BJ (cell line): ENCODE measurements at regions of chr7 and their contacts with region 1.

Region 1: GRCh38 chr7:128425850-128426249 is 16.1 kb upstream of the IMPDH1 start:
- DNase-seq: no peak
- H3K4me3 ChIP-seq: no peak overlapping the region
- H3K27me3 ChIP-seq: no peaks in the 10 kb centered on the region
- CTCF ChIP-seq: peak; percentile 96

Region 2: DNA sequence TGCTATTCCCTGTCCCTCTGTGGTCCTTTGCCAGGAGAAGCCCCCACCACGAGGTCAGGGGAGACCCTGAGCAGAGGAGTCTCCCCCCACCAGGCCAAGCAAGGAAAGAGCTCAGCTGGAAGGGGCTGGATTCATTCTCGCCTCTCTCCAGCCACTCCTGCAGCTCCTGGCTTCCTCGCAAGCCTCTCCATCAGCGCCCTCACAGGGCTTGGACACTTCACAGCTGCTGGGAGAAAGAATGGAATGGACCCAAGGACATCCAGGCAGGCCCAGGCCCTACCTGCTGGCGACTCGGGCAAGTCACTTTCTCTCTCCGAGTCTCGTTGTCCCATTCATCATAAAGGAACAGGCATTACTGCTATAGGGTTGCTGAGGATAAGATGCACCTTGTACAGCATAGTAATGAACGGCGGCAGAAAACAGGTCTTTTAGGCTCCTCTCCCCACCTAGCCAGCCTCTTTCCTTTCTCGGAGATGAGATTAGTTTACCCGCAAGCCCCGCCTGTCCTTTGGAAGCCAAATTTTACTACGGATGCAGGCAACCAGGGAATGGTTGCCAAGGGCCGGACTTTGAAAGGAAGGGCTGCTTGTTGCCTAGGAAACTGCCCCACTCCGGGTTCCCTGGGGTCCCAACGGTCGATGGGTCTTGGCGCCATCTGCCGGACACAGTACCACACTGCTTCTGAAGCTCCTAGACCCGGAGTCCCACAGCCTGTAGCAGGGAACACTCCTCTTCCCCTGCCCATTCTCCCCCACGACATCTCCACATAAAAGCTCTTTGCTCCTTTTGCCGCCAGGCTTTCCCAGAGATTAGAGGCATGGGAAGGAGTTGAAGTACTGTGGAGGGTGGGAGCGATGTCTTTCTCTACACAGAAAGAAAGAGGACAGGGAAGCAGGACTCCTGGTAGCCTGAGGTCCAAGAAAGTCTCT is 38.4 kb before region 1 on chr7:
- CTCF ChIA-PET with region 1: interaction called, 22 read pairs
- POLR2A ChIA-PET with region 1: no interaction called
- DNase-seq: no peak
- H3K4me3 ChIP-seq: no peak overlapping the region
- H3K27me3 ChIP-seq: peaks cover 9% of the 10 kb centered on the region
- CTCF ChIP-seq: peak; percentile 87

Region 3: DNA sequence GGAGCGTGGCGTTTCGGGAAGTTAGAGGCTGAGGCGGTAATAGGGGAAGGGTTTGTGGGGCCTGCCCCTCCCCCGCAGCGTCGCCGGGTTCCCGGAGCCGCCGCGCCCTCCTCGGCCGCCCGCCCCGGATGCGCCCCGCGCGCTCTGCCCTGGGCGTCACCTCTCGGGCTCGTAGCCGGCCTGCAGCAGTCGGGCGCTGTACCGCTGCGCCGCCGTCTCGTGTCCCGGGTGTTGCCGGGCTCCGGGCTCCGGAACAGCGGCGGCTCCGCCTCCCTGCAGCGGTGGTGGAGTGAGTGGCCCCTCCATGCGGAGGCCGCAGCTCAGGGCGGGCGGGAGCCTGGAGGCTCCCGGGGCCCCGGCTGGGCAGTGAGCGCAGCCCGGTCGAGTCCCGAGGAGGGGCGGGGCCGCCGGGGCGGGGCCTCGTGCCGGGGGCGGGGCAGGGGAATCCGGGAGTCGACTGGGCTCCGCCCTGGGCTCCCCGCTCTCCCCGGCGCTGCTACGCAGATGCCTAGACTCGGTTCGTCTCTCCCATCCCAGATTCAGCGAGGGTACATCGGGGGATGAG is 16.2 kb before region 1 on chr7 and contains the start of gene IMPDH1:
- CTCF ChIA-PET with region 1: interaction called, 197 read pairs
- POLR2A ChIA-PET with region 1: no interaction called
- DNase-seq: peak; percentile 34
- H3K4me3 ChIP-seq: peak within 1 kb of the TSS; percentile 60
- H3K27me3 ChIP-seq: peaks cover 2% of the 10 kb centered on the region
- CTCF ChIP-seq: no peak
- polyA plus RNA-seq, gene IMPDH1: 65.7 and 84.5 TPM in 2 replicates

Region 4: GRCh38 chr7:128437426-128438332 is 11.8 kb after region 1 on chr7:
- CTCF ChIA-PET with region 1: interaction called, 76 read pairs
- POLR2A ChIA-PET with region 1: no interaction called
- DNase-seq: no peak
- H3K4me3 ChIP-seq: no peak overlapping the region
- H3K27me3 ChIP-seq: peaks cover 2% of the 10 kb centered on the region
- CTCF ChIP-seq: no peak

Region 5: DNA sequence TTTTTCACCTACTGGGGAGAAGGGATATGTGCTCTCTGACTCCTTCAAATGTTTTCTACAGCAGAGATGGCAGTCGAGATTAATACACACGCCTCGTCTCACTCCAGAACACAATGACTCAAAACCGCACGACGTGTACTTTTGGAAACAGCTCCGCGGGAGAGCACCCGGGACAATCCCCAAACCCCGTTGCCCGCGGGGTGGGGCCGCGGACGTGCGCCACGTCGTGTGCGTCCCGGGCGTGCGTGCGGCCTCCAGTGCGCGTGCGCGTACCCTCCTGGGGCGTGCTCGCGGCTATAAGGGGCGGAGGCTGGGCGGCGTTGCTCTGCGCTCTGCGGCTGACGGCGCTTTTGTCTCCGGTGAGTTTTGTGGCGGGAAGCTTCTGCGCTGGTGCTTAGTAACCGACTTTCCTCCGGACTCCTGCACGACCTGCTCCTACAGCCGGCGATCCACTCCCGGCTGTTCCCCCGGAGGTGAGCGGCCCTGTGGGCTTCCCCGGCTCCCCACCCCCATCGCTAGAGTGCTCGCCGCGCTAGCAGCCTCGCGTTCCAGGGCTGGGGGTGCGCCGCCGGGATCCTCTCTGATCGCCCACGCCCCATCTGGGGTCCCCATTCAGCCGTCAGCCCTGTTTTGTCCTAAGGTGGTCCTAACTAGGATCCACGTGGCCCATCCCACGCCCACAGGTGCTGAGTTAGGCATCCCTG is 29.9 kb after region 1 on chr7 and contains the start of gene HILPDA:
- CTCF ChIA-PET with region 1: interaction called, 227 read pairs
- POLR2A ChIA-PET with region 1: interaction called, 6 read pairs
- DNase-seq: peak; percentile 76
- H3K4me3 ChIP-seq: peak within 1 kb of the TSS; percentile 88
- H3K27me3 ChIP-seq: no peaks in the 10 kb centered on the region
- CTCF ChIP-seq: 0 out of 2 replicates have a peak, but pooled peaks have one; percentile 11
- polyA plus RNA-seq, gene HILPDA: 16.0 and 21.5 TPM in 2 replicates

Region 6: DNA sequence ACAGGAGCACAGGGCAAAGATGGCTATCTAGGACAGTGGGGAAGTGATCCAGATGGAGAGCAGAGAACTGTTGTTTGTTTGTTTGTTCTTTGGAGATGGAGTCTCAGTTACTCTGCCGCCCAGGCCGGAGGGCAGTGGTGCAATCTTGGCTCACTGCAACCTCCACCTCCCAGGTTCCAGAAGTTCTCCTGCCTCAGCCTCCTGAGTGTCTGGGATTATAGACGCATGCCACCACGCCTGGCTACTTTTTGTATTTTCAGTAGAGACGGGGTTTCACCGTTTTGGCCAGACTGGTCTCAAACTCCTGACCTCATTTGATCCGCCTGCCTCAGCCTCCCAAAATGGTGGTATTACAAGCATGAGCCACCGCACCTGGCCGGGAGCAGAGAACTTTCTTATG is 71.6 kb after region 1 on chr7:
- CTCF ChIA-PET with region 1: no interaction called
- POLR2A ChIA-PET with region 1: no interaction called
- DNase-seq: no peak
- H3K4me3 ChIP-seq: no peak overlapping the region
- H3K27me3 ChIP-seq: no peaks in the 10 kb centered on the region
- CTCF ChIP-seq: no peak

Region 7: GRCh38 chr7:128530855-128531104 is 104.9 kb after region 1 on chr7:
- CTCF ChIA-PET with region 1: no interaction called
- POLR2A ChIA-PET with region 1: no interaction called
- DNase-seq: no peak
- H3K4me3 ChIP-seq: peak overlapping the region; percentile 72
- H3K27me3 ChIP-seq: no peaks in the 10 kb centered on the region
- CTCF ChIP-seq: no peak

Region 8: DNA sequence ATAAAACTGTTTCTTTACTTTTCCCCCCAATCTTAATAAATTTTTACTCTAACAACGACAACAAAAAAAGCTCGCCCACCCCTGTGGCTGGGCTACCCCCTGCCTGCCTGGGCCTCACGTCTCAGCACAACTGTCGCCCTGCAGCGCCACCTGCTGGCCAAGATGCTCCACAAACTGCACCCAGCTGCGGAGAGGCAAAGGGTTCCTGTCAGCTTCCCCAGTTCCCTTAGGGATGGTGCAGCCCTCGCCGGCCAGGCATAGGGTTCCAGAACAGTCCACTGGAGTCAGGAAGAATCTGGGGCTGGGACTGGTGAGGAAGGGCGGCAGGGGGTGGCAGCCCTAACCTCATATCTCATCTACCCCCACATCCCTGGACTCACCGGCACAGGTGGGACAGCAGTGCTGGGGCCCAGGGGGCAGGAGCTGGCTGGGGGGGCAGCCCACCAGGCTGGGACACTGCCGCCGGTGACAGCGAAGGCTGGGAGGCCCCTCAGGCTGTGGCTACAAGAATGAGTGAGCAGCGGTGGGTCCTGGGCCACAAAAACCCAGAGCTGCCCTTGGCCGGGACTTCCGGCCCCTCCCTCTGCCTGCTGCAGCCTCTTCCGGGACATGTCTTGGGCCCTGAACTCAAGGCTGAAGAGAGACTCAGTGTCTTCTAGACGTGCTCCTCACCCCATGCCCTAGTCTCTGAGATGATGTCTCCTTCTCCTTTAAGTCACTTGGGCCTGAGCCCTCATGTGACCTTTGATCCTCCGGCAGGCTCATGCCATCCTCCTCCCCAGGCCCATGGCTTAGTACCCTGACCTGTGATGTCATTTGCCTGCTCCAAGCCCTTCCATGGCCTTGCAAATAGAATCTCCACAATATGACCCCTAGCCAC is 458.0 kb after region 1 on chr7:
- CTCF ChIA-PET with region 1: interaction called, 86 read pairs
- POLR2A ChIA-PET with region 1: no interaction called
- DNase-seq: no peak
- H3K4me3 ChIP-seq: no peak overlapping the region
- H3K27me3 ChIP-seq: 0 out of 2 replicates have a peak, but pooled peaks cover 2% of the 10 kb centered on the region
- CTCF ChIP-seq: peak; percentile 90